Esophagus squamous epithelium (tissue), 5 donors: ENCODE measurements at regions of chr2 and their contacts with region 1.

Region 1: GRCh38 chr2:230798769-230799399 is 65.9 kb upstream of the ITM2C start:
- DNase-seq: no peak
- H3K4me3 ChIP-seq: no peak overlapping the region
- H3K27ac ChIP-seq: no peak overlapping the region
- H3K4me1 ChIP-seq: peaks cover 22 to 50% (median 42%) of the 10 kb centered on the region in 3 donors
- H3K27me3 ChIP-seq: no peaks in the 10 kb centered on the region
- CTCF ChIP-seq: peak in 5 of 6 experiments; percentile 38 to 74 (median 59)
- POLR2A ChIP-seq: no peak

Region 2: GRCh38 chr2:230614913-230615332 is 184.0 kb before region 1 on chr2:
- intact Hi-C with region 1: loop called (anchors 10 kb)
- DNase-seq: no peak
- H3K4me3 ChIP-seq: no peak overlapping the region
- H3K27ac ChIP-seq: no peak overlapping the region
- H3K4me1 ChIP-seq: peaks cover 0 to 18% (median 0%) of the 10 kb centered on the region in 3 donors
- H3K27me3 ChIP-seq: no peaks in the 10 kb centered on the region
- CTCF ChIP-seq: no peak
- POLR2A ChIP-seq: peak in 1 of 4 donors; percentile 29

Region 3: DNA sequence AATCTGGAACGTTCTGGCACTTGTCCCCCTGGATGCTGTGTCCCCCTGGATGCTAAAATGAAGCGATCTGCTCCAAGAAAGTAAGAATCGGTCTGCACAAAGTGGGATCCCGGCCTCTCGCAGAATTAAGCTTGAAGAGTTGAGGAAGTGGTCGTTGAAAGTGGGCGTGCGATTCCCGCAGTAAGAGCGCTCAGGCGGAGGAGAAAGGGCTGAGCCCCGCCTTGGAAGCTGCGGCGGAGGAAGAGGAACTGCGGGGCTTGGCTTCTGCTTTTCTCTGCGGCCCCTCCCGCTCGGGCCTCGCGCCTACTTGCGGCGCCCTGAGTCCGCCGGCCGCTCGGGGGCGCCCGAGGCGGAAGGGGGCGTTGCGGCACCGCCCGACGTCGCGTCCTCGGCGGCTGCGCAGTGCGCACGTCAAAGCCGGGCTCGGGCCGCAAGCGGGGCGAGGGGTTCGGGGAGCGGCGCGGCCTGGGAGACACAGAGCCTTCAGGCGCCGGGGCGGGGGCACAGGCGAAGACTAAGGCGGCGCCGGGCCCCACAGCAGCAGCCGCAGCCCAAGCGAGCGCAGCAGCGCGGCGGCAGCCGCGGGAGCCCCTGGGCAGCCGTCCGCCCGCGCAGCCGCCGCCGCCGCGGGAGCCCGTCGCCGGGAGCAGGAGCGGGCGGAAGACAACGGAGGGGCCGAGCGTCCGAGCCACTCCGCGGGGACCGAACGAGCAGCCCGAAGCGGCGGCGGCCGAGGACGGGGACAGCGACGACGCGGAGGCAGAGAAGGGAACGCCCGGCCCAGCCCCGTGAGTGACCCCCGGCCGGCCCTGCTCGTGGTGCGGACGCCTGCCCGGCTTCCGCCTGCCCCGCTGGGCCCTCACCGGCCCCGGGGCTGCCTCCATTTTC is 86.2 kb before region 1 on chr2 and contains the start of gene CAB39:
- intact Hi-C with region 1: loop called (anchors 5 kb)
- DNase-seq: peak; percentile 61
- H3K4me3 ChIP-seq: peak within 1 kb of the TSS; percentile 82 to 98 (median 93)
- H3K27ac ChIP-seq: peak within 1 kb of the TSS; percentile 93 to 99 (median 97)
- H3K4me1 ChIP-seq: peaks cover 0 to 48% (median 22%) of the 10 kb centered on the region in 3 donors
- H3K27me3 ChIP-seq: no peaks in the 10 kb centered on the region
- CTCF ChIP-seq: peak; percentile 70 to 93 (median 87)
- POLR2A ChIP-seq: peak in 3 of 4 donors; percentile 84 to 96 (median 86)
- total RNA-seq, gene CAB39: 47.6 to 80.3 (median 71.8) TPM